AG04449 (cell line): ENCODE measurements at regions of chr20 and their contacts with region 1.

Region 1: DNA sequence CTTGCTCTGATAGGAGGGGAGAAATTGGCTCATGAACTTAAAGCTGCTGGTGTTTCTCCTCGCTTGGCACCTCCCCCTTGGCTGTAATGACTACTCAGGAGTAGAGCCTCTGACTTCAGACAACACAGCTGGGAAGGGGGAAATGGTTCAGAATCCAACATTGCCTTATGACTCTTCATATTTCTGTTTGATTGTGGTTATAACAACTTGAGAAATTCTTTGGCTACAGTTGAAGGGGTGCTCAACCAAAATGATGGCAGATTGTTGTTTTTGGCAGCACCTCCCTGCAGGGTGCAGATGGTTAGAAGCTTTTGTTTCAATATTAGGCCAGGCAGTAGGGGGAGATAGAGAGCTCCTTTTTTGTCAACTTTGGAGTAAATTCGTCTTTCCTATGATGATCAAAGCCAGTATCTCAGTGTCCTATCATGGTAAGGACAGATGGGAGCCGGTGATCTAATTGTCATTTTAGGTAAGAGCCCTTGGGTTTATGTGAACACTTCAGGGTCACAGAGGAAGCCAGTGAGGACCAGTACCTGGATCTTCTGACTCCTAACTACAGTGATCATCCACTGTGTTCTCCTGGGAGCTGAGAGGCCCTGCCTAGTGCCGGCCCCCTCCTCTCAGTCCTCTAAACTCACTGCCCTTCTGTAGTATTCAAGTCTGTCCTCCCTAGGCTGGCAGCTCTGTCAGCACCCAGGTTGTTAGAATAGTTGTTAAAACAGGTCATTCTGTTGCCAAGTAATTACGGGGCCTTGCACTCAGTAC is 39.9 kb downstream of the RPRD1B start:
- DNase-seq: peak; percentile 93
- H3K4me3 ChIP-seq: no peak overlapping the region
- CTCF ChIP-seq: peak; percentile 57

Region 2: GRCh38 chr20:37935435-37935834 is 138.1 kb before region 1 on chr20:
- CTCF ChIA-PET with region 1: no interaction called
- POLR2A ChIA-PET with region 1: no interaction called
- DNase-seq: no peak
- H3K4me3 ChIP-seq: no peak overlapping the region
- CTCF ChIP-seq: no peak

Region 3: GRCh38 chr20:38057351-38057972 is 16.0 kb before region 1 on chr20:
- CTCF ChIA-PET with region 1: interaction called, 104 read pairs
- POLR2A ChIA-PET with region 1: no interaction called
- DNase-seq: no peak
- H3K4me3 ChIP-seq: no peak overlapping the region
- CTCF ChIP-seq: peak; percentile 77

Region 4: DNA sequence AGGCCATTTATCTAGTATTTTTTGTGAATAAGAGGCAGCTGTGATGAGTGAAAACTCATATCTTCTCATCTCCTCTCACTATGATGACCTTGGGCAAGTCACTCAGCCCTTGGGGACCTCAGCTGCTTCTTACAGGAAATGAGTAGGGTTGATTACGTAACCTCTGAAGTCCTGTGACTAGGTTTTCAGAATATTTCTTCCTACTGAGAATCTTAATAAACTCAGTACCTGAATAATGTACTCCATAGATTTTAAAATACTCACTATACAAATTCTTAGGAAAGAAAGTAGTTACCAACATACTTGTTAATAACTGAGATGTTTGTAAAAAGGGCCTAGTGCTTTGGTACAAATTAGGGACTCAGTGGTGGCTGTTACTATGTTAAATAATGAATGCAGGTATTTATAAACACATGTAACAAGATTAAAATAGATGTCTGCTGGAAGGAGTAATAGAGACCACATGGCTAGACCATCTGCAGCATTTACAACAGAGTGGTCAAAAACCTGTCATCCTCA is 20.9 kb after region 1 on chr20:
- CTCF ChIA-PET with region 1: interaction called, 16 read pairs
- POLR2A ChIA-PET with region 1: no interaction called
- DNase-seq: no peak
- H3K4me3 ChIP-seq: no peak overlapping the region
- CTCF ChIP-seq: no peak

Region 5: GRCh38 chr20:38143646-38144554 is 70.4 kb after region 1 on chr20:
- CTCF ChIA-PET with region 1: interaction called, 14 read pairs
- POLR2A ChIA-PET with region 1: no interaction called
- DNase-seq: peak; percentile 84
- H3K4me3 ChIP-seq: no peak overlapping the region
- CTCF ChIP-seq: no peak

Region 6: GRCh38 chr20:38165089-38165989 is 91.8 kb after region 1 on chr20 and contains the start of gene TGM2:
- CTCF ChIA-PET with region 1: interaction called, 46 read pairs
- POLR2A ChIA-PET with region 1: no interaction called
- DNase-seq: no peak
- H3K4me3 ChIP-seq: peak within 1 kb of the TSS; percentile 49
- CTCF ChIP-seq: peak; percentile 84

Region 7: DNA sequence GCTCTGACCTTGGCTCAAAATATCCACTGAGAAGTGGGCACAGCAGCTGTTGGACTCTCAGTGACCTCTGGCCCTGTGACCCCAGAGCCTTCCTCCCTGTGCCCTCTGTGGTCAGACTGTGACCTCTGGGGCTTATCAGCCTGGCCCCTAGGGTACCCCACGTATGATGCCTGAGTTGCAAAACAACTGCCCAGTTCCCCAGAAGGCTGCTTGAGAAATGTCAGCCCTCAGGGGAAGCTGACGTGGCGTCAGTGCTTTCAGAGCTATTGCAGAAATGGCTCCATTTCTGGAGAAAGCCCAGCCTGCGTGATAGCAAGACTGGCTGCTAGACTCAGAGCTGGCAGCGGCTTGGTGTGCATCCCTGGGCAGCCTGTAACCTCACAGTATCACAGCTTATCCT is 123.1 kb after region 1 on chr20:
- CTCF ChIA-PET with region 1: interaction called, 10 read pairs
- POLR2A ChIA-PET with region 1: no interaction called
- DNase-seq: no peak
- H3K4me3 ChIP-seq: no peak overlapping the region
- CTCF ChIP-seq: no peak

Region 8: DNA sequence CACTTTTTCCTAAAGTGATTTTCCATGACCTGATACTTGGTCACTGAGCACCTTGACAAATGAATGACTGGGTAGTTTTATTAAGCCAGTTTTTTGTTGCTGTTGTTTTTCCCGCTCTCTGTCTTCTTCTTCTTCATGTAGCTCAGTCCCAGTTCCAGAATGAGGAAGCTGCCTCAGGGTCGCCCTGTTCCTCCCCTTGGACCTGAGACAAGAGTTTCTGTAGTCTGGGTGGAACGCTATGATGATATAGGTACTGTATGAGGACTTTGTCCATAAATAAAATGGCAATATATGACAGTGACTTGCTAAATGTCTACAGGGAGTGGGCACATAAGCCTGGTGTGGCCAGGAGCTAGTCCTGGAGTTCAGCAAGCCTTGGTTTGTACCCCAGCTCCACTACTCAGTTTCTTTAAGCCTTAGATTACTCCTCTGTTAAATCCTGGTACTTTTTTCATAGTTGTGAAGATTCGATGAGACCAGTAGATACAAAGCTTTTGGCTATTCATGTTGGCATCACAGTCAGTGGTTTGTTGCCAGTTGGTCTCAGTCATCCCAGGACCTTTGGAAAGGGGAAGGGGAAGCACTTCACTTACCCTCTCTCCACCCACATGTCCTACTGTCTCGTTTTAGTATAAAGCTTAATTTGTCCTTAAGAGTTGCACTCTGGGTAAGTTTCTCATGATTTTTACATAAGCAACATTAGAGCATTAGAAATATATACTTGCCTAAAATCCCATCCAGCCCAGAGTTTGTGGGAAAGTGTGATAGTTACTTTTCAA is 496.4 kb after region 1 on chr20:
- CTCF ChIA-PET with region 1: no interaction called
- POLR2A ChIA-PET with region 1: no interaction called
- DNase-seq: no peak
- H3K4me3 ChIP-seq: no peak overlapping the region
- CTCF ChIP-seq: no peak